PC-9 (cell line): ENCODE measurements at regions of chr16 and their contacts with region 1.

Region 1: GRCh38 chr16:27179500-27180072 is 23.7 kb upstream of the KDM8 start:
- DNase-seq: peak; percentile 55 to 65
- H3K4me3 ChIP-seq: no peak overlapping the region
- H3K27ac ChIP-seq: no peak overlapping the region
- H3K4me1 ChIP-seq: 0 out of 2 replicates have a peak, but pooled peaks cover 1% of the 10 kb centered on the region
- H3K27me3 ChIP-seq: peaks cover 19% of the 10 kb centered on the region; the same call in 1 of the 2 replicates
- CTCF ChIP-seq: peak; percentile 88

Region 2: GRCh38 chr16:27321011-27321915 is 141.7 kb after region 1 on chr16:
- CTCF ChIA-PET with region 1: interaction called, 4 read pairs
- POLR2A ChIA-PET with region 1: no interaction called
- intact Hi-C with region 1: loop called (anchors 5 kb)
- DNase-seq: peak in 1 of 2 experiments; percentile 82
- H3K4me3 ChIP-seq: no peak overlapping the region
- H3K27ac ChIP-seq: peak overlapping the region; percentile 98
- H3K4me1 ChIP-seq: peaks cover 92% of the 10 kb centered on the region
- H3K27me3 ChIP-seq: no peaks in the 10 kb centered on the region
- CTCF ChIP-seq: no peak

Region 3: GRCh38 chr16:27346819-27347218 is 167.2 kb after region 1 on chr16:
- CTCF ChIA-PET with region 1: no interaction called
- POLR2A ChIA-PET with region 1: no interaction called
- intact Hi-C with region 1: no loop called
- DNase-seq: no peak
- H3K4me3 ChIP-seq: no peak overlapping the region
- H3K27ac ChIP-seq: no peak overlapping the region
- H3K4me1 ChIP-seq: no peaks in the 10 kb centered on the region
- H3K27me3 ChIP-seq: no peaks in the 10 kb centered on the region
- CTCF ChIP-seq: no peak